ENCODE measurements at regions of chr9 and their contacts with region 1.

Region 1: GRCh38 chr9:76302947-76303940 is 91.0 kb downstream of the RFK start:
- DNase-seq: no peak
- H3K4me3 Mint-ChIP-seq: no peak overlapping the region
- H3K27ac Mint-ChIP-seq: no peak overlapping the region
- H3K4me1 Mint-ChIP-seq: no peaks in the 10 kb centered on the region
- H3K27me3 Mint-ChIP-seq: peaks cover 2% of the 10 kb centered on the region

Region 2: GRCh38 chr9:75265525-75265972 is 1037.7 kb before region 1 on chr9:
- intact Hi-C with region 1: loop called (anchors 2 kb)
- DNase-seq: peak; percentile 4
- H3K4me3 Mint-ChIP-seq: no peak overlapping the region
- H3K27ac Mint-ChIP-seq: no peak overlapping the region
- H3K4me1 Mint-ChIP-seq: peaks cover 4% of the 10 kb centered on the region
- H3K27me3 Mint-ChIP-seq: peaks cover 1% of the 10 kb centered on the region

Region 3: DNA sequence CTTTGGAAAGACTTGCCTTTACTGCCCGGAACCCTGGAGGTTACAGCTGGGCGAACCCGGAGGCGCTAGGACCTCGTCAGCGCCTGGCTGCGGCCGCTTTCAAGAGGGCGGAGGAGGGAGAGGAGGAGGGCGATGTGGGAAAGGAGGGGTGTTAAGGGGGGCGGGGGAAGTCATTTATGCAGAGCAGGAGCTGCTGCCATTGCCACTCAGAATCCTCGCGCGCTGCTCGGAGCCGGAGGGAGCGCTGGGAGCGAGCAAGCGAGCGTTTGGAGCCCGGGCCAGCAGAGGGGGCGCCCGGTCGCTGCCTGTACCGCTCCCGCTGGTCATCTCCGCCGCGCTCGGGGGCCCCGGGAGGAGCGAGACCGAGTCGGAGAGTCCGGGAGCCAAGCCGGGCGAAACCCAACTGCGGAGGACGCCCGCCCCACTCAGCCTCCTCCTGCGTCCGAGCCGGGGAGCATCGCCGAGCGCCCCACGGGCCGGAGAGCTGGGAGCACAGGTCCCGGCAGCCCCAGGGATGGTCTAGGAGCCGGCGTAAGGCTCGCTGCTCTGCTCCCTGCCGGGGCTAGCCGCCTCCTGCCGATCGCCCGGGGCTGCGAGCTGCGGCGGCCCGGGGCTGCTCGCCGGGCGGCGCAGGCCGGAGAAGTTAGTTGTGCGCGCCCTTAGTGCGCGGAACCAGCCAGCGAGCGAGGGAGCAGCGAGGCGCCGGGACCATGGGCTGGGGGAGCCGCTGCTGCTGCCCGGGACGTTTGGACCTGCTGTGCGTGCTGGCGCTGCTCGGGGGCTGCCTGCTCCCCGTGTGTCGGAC is 412.6 kb before region 1 on chr9 and contains the start of gene PCSK5:
- intact Hi-C with region 1: loop called (anchors 2 kb)
- DNase-seq: peak; percentile 81
- H3K4me3 Mint-ChIP-seq: peak within 1 kb of the TSS; percentile 91
- H3K27ac Mint-ChIP-seq: peak within 1 kb of the TSS; percentile 76
- H3K4me1 Mint-ChIP-seq: peaks cover 35% of the 10 kb centered on the region
- H3K27me3 Mint-ChIP-seq: peaks cover 37% of the 10 kb centered on the region
- total RNA-seq, gene PCSK5: 3.3 and 3.7 TPM in 2 replicates

Region 4: DNA sequence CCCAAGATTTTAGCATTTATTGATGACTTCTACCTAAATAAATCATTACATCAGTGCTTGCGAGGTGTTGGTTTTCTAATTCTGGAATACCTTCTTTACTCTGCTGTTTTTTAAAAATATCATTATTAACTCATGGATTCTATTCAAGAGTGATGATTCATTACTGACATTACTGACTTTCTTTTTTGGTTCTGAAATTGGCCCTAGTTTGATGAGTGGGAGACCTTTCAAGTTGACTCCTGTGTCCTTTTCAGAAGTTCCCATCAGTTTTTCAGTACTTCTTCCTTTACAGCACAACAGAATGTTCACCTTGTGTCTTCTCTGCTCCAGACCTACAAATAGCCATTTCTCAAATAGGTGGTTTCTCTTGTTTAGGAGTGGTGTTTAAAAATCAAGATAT is 298.7 kb before region 1 on chr9:
- intact Hi-C with region 1: loop called (anchors 10 kb)
- DNase-seq: no peak
- H3K4me3 Mint-ChIP-seq: no peak overlapping the region
- H3K27ac Mint-ChIP-seq: no peak overlapping the region
- H3K4me1 Mint-ChIP-seq: peaks cover 21% of the 10 kb centered on the region
- H3K27me3 Mint-ChIP-seq: no peaks in the 10 kb centered on the region

Region 5: GRCh38 chr9:76077537-76077936 is 225.7 kb before region 1 on chr9:
- intact Hi-C with region 1: no loop called
- DNase-seq: no peak
- H3K4me3 Mint-ChIP-seq: no peak overlapping the region
- H3K27ac Mint-ChIP-seq: no peak overlapping the region
- H3K4me1 Mint-ChIP-seq: no peaks in the 10 kb centered on the region
- H3K27me3 Mint-ChIP-seq: no peaks in the 10 kb centered on the region

Region 6: GRCh38 chr9:76516350-76516749 is 213.1 kb after region 1 on chr9:
- intact Hi-C with region 1: no loop called
- DNase-seq: no peak
- H3K4me3 Mint-ChIP-seq: no peak overlapping the region
- H3K27ac Mint-ChIP-seq: no peak overlapping the region
- H3K4me1 Mint-ChIP-seq: peaks cover 9% of the 10 kb centered on the region
- H3K27me3 Mint-ChIP-seq: peaks cover 5% of the 10 kb centered on the region

Region 7: DNA sequence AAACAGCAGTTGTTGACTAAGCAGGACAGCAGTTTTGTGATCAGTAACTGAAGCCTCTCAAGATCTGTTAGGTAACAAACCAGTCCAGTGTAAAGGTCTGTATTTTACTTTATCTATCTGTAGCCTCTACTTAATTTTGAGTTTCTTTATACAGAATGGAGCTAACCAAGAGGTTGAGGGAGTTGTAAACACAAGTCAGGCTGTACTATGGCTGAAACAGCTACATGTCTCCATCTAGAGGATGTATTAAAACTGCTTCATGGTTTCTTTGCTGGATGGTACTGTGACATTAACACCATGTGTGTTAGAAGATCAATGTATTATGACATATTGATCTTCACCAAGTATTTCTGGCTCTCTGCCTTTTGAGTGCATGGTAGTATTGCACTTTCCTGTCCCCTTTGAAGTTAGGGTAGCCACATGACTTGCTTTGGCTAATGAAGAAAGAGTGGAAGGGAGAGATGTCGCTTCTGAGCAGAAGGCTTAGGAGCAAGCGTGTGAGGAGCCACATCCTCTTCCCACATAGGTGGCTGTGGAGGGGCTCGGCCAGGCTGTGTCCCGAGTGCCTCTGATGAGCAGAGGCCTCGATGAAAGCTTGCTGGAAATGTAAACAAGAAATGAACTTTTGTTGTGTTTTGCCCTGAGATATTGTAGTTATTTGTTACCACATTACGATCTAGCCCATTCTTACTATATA is 355.4 kb after region 1 on chr9:
- intact Hi-C with region 1: no loop called
- DNase-seq: no peak
- H3K4me3 Mint-ChIP-seq: no peak overlapping the region
- H3K27ac Mint-ChIP-seq: no peak overlapping the region
- H3K4me1 Mint-ChIP-seq: peaks cover 22% of the 10 kb centered on the region
- H3K27me3 Mint-ChIP-seq: no peaks in the 10 kb centered on the region

Region 8: GRCh38 chr9:76704593-76705204 is 401.5 kb after region 1 on chr9:
- intact Hi-C with region 1: loop called (anchors 10 kb)
- DNase-seq: no peak
- H3K4me3 Mint-ChIP-seq: no peak overlapping the region
- H3K27ac Mint-ChIP-seq: no peak overlapping the region
- H3K4me1 Mint-ChIP-seq: peaks cover 6% of the 10 kb centered on the region
- H3K27me3 Mint-ChIP-seq: peaks cover 13% of the 10 kb centered on the region